Activated CD8-positive, alpha-beta T cell treated with anti-CD3 and anti-CD28 coated beads for 36 hours (primary cell): ENCODE measurements at regions of chr13 and their contacts with region 1.

Region 1: DNA sequence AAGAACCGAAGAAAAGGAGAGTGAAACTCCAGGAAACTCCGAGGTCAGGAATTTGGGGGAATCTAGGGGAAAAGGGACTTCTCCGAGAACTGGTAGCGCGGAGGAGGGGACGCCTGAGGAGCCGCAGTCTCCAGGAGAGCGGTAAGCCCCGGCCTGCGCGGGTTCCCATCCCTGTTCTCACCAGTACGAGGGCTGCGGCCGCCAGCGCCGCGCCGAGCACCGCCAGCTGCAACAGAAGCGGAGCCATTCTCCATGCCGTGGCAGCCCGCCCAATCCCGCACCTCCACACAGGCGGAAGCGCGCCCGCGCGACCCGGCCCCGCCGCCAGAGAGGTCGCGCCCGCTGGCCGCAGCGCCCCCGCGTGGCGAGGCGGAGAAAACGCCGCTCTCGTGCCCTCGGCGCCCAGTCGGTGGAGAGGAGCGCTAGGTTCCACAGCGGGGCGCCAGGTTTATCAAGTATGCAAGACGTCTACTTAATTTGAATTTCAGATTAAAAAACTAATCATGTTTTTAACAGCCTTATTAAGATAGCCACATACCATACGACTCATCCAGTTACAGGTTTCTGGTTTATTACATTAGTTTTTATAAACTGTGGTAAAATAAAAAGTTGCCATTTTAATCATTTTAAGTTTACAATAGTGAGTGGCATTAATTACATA is at the start of gene ALG5:
- DNase-seq: peak; percentile 90
- ATAC-seq: peak; percentile 66
- H3K4me3 Mint-ChIP-seq: peak within 1 kb of the TSS; percentile 99
- H3K27ac Mint-ChIP-seq: peak within 1 kb of the TSS; percentile 100
- H3K4me1 Mint-ChIP-seq: peaks cover 34% of the 10 kb centered on the region
- H3K27me3 Mint-ChIP-seq: no peaks in the 10 kb centered on the region
- CTCF ChIP-seq: peak; percentile 92
- total RNA-seq, gene ALG5: 25.5 to 26.8 TPM

Region 2: DNA sequence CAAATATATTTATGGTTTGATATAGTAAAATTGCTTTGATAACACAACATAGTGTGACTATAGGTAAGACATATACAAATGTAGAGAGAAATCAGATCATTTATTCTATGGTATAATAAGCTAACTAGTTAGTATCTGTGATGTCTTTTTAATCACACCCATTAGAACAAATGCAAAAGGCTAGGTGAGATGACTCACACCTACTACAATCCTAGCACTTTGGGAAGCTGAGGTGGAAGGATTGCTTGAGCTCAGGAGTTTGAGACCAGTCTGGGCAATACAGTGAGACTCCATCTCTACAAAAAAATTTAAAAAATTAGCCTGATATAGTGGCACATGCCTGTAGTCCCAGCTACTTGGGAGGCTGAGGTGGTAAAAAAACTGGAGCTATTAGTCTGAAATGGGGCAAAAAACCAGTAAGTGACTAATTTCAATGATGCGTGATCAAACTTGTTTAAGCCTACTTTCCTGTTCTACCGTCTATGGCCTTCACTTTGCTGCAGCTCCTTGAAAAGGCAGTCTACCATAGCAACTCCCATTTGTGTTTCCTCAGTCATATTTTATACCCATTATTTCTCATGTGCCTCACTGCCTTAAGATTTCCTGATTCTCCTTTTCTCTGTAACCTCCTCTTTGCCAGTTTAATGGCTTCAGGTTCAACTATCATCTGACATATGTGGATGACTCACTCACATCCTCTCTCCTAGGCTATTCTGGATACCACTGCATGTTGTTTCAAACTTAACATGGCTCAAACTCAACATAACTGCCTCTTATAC is 12.5 kb before region 1 on chr13:
- CTCF ChIA-PET with region 1: interaction called, 4 read pairs
- POLR2A ChIA-PET with region 1: interaction called, 22 read pairs
- intact Hi-C with region 1: no loop called
- DNase-seq: no peak
- ATAC-seq: no peak
- H3K4me3 Mint-ChIP-seq: no peak overlapping the region
- H3K27ac Mint-ChIP-seq: peak overlapping the region; percentile 3
- H3K4me1 Mint-ChIP-seq: peaks cover 2% of the 10 kb centered on the region
- H3K27me3 Mint-ChIP-seq: no peaks in the 10 kb centered on the region
- CTCF ChIP-seq: no peak

Region 3: GRCh38 chr13:37023871-37024270 is 24.7 kb after region 1 on chr13:
- CTCF ChIA-PET with region 1: no interaction called
- POLR2A ChIA-PET with region 1: interaction called, 12 read pairs
- intact Hi-C with region 1: no loop called
- DNase-seq: no peak
- ATAC-seq: no peak
- H3K4me3 Mint-ChIP-seq: no peak overlapping the region
- H3K27ac Mint-ChIP-seq: peak overlapping the region; percentile 4
- H3K4me1 Mint-ChIP-seq: peaks cover 4% of the 10 kb centered on the region
- H3K27me3 Mint-ChIP-seq: no peaks in the 10 kb centered on the region
- CTCF ChIP-seq: no peak

Region 4: DNA sequence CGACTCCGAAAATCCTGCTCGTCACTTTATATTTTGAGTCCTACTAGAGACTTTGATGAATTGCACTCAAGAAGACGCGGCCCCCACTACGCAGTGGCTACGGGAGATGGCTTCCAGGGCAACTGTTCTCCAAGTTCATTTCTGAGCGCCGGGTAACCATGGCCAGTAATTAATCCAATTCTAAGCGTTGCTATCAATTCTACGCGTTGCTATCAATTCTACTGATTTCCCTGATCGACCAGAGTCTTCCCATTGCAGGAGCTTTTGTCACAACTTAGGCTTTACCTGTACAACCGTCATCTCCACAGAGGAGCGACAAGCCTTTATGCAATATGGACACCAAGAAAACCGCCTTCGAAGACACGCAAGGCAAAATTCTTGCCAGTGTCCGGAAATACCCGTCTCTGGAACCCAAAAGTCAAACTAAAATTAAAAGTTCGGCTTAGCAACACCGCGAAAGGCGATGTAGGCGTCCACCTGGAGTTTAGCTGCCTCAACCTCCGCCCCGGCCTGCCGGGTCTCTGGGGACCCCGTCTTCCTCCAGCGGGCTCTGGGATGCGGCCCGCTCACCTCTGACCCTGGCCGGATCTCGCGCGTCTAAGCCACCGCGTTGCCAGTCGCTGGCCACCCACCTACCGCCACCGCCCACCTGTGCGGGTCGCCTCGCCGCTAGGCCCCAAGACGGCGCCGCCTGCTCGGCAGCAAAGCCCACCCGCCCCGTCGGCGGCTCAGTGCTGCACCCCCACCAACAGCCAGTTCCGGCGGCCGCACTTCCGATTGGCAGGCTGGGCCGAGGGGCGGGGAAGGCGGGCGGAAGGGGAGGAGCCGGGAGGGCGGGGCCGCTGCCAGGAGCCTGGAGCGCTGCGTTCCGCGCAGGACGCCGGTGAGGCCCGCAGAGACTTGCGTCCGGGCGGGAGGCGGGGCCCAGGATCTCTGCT is 60.0 kb after region 1 on chr13 and contains the start of gene SUPT20H:
- CTCF ChIA-PET with region 1: interaction called, 3 read pairs
- POLR2A ChIA-PET with region 1: interaction called, 14 read pairs
- intact Hi-C with region 1: no loop called
- DNase-seq: peak; percentile 95
- ATAC-seq: peak; percentile 99
- H3K4me3 Mint-ChIP-seq: peak within 1 kb of the TSS; percentile 95
- H3K27ac Mint-ChIP-seq: peak within 1 kb of the TSS; percentile 97
- H3K4me1 Mint-ChIP-seq: peaks cover 31% of the 10 kb centered on the region
- H3K27me3 Mint-ChIP-seq: no peaks in the 10 kb centered on the region
- CTCF ChIP-seq: no peak
- total RNA-seq, gene SUPT20H: 59.6 to 63.4 TPM

Region 5: GRCh38 chr13:37403776-37404528 is 404.8 kb after region 1 on chr13:
- CTCF ChIA-PET with region 1: no interaction called
- POLR2A ChIA-PET with region 1: no interaction called
- intact Hi-C with region 1: no loop called
- DNase-seq: no peak
- ATAC-seq: no peak
- H3K4me3 Mint-ChIP-seq: no peak overlapping the region
- H3K27ac Mint-ChIP-seq: no peak overlapping the region
- H3K4me1 Mint-ChIP-seq: no peaks in the 10 kb centered on the region
- H3K27me3 Mint-ChIP-seq: no peaks in the 10 kb centered on the region
- CTCF ChIP-seq: no peak